GM10248 (cell line): ENCODE measurements at regions of chr5 and their contacts with region 1.

Region 1: DNA sequence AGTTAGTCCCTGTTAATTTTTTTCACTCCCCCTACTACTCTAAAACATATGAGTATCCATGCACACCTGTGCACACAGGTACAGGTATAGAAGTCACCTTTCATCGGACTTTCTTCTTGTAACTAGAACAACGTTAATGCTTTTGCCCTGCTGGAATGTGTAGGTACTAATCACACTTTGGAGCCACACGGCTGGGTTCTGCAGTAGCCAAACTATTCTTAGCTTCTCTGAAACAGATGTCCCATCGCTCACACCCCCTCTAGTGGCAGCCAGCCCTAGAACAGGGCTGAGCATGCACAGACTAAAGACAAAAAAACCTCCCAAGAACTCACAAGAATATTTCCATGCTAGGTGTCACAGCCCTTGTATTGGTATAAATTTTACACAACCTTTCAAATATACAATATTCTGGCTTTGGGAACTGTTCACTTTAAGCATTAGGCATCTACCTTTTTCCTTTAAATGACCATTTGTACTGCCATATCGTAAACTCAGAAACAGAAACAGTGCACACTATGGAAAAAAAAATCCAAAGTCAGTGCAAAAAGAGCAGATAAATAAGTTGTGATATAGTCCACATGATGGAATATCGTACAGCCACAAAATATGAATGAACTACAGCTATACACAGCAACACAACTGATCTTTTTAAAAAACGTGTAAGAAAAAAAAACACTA is 64.0 kb downstream of the RETREG1 start:
- DNase-seq: peak; percentile 44
- CTCF ChIP-seq: peak; percentile 74

Region 2: GRCh38 chr5:16364910-16365309 is 187.9 kb before region 1 on chr5:
- CTCF ChIA-PET with region 1: no interaction called
- POLR2A ChIA-PET with region 1: no interaction called
- DNase-seq: no peak
- CTCF ChIP-seq: no peak

Region 3: DNA sequence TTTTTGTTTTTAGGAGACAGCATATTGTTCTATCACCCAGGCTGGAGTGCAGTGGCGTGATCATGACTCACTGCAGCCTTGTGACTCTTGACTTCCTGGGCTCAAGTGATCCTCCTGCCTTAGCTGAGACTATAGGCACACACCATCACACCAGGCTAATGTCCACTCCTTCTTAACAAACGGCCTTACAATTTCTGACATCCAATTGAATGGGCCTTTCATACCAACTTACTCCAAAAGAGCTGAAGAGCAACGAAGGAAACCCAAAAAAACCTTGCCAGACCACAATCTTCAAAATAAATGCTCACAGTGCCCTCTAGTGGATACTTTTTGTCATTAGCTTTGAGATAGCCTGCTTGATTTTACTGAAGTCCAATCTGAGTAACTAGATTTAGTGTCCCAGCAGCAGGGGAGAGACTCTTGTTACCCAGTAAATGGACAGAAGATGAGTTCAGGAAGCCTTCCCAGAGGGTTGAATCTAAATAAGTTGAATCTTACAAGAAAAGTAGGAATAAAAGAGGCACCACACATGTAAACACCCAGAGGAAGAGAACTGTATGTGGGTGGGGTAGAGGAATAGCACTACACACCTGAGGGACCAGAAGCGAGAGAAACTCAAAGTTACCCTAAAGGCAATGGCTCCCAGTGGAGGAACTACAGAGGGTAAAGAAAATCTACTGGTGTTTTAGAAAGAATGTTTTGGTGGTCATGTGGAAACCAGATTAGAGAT is 96.5 kb before region 1 on chr5:
- CTCF ChIA-PET with region 1: interaction called, 42 read pairs
- POLR2A ChIA-PET with region 1: interaction called, 5 read pairs
- DNase-seq: peak; percentile 40
- CTCF ChIP-seq: peak; percentile 43

Region 4: GRCh38 chr5:16489322-16489791 is 63.4 kb before region 1 on chr5:
- CTCF ChIA-PET with region 1: interaction called, 14 read pairs
- POLR2A ChIA-PET with region 1: no interaction called
- DNase-seq: no peak
- CTCF ChIP-seq: peak; percentile 29

Region 5: DNA sequence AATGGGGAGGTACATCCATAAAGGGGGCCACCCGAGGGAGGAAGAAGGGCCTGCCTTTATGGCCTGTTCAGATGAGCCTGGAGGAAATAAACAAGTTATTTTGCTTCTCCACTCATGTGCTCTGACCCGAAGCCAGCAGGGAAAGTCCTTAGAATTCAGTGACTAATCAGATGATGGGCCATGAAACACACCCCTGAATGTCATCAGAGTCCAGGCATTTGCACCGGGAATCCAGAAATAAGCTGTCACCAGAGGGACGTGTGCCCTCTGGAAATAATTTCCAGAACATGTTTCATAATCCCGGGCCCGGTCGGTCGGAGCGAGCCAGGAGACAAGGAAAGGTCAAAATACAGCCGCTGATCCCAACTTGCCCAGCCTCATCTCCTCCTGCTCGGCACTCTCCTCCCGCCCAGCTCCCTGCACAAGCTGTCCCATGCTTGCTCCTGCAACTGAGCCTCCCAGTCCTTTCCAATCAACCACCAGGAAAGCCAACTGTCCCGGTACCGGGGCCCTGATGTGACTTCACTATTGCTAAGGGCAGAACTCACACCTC is 13.6 kb before region 1 on chr5:
- CTCF ChIA-PET with region 1: interaction called, 21 read pairs
- POLR2A ChIA-PET with region 1: no interaction called
- DNase-seq: no peak
- CTCF ChIP-seq: no peak

Region 6: GRCh38 chr5:16574789-16575721 is 22.2 kb after region 1 on chr5:
- CTCF ChIA-PET with region 1: interaction called, 16 read pairs
- POLR2A ChIA-PET with region 1: no interaction called
- DNase-seq: no peak
- CTCF ChIP-seq: no peak

Region 7: GRCh38 chr5:16679863-16680262 is 127.1 kb after region 1 on chr5:
- CTCF ChIA-PET with region 1: no interaction called
- POLR2A ChIA-PET with region 1: no interaction called
- DNase-seq: no peak
- CTCF ChIP-seq: no peak

Region 8: GRCh38 chr5:16922430-16922829 is 369.6 kb after region 1 on chr5:
- CTCF ChIA-PET with region 1: no interaction called
- POLR2A ChIA-PET with region 1: no interaction called
- DNase-seq: no peak
- CTCF ChIP-seq: no peak